Activated naive CD8-positive, alpha-beta T cell treated with anti-CD3 and anti-CD28 coated beads, Interleukin-2, amount 10 ng/mL, durations not matched to agents 7 days and 5 days (primary cell): ENCODE measurements at regions of chr17 and their contacts with region 1.

Region 1: GRCh38 chr17:75877752-75878173 is 618 bp downstream of the TRIM47 start:
- DNase-seq: peak; percentile 84
- ATAC-seq: peak; percentile 70
- H3K4me3 Mint-ChIP-seq: peak overlapping the region; percentile 91
- H3K27ac Mint-ChIP-seq: peak overlapping the region; percentile 93
- H3K4me1 Mint-ChIP-seq: peaks cover 28% of the 10 kb centered on the region
- H3K27me3 Mint-ChIP-seq: peaks cover 12% of the 10 kb centered on the region

Region 2: DNA sequence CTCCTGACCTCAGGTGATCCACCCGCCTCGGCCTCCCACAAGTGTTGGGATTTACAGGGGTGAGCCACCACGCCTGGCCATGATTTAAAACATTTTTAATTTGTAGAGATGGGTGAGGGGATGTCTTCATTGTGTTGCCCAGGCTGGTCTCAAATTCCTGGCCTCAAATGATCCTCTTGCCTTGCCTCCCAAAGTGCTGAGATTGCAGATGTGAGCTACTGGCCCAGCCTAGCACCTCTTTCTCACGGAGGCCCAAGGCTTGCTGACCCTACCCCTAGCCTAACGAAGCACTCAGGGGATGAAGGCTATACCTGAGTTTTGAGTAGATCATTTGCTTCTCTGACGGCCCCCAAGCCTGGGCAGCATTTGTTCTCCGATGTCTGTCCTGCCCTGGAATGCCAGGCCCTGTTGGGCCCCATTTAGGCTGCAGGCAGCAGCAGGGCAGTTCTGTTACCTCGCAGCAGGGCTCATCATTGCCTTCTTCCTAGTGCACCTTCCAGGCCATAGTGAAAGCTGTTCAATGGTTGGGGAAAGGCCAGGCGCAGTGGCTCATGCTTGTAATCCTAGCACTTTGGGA is 66.5 kb before region 1 on chr17:
- POLR2A ChIA-PET with region 1: no interaction called
- DNase-seq: no peak
- ATAC-seq: no peak
- H3K4me3 Mint-ChIP-seq: no peak overlapping the region
- H3K27ac Mint-ChIP-seq: no peak overlapping the region
- H3K4me1 Mint-ChIP-seq: no peaks in the 10 kb centered on the region
- H3K27me3 Mint-ChIP-seq: no peaks in the 10 kb centered on the region

Region 3: DNA sequence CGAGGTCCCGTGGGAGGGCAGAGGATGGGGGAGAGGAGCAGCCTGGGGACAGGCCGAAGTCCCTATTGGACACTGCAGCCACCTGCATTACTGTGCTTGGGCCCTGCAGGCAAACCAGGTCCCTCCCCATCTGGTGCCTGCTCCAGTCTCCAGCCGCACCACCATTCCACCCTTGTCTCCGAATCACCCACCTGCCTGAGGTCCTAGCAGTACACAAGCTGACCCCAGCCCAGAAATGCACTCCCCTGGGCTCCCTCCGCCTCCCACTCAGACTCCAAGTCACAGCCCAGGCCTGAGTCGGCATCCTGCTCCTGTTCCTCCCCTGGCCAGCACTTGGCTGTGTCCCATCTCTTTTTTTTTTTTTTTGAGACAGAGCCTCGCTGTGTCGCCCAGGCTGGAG is 39.9 kb before region 1 on chr17:
- POLR2A ChIA-PET with region 1: interaction called, 11 read pairs
- DNase-seq: no peak
- ATAC-seq: no peak
- H3K4me3 Mint-ChIP-seq: no peak overlapping the region
- H3K27ac Mint-ChIP-seq: peak overlapping the region; percentile 52
- H3K4me1 Mint-ChIP-seq: peaks cover 29% of the 10 kb centered on the region
- H3K27me3 Mint-ChIP-seq: no peaks in the 10 kb centered on the region

Region 4: GRCh38 chr17:75864448-75864871 is 13.3 kb before region 1 on chr17:
- POLR2A ChIA-PET with region 1: interaction called, 41 read pairs
- DNase-seq: peak; percentile 58
- ATAC-seq: peak; percentile 77
- H3K4me3 Mint-ChIP-seq: peak overlapping the region; percentile 48
- H3K27ac Mint-ChIP-seq: peak overlapping the region; percentile 76
- H3K4me1 Mint-ChIP-seq: peaks cover 18% of the 10 kb centered on the region
- H3K27me3 Mint-ChIP-seq: no peaks in the 10 kb centered on the region

Region 5: GRCh38 chr17:75896415-75897159 is 18.8 kb after region 1 on chr17 and contains the start of gene TRIM65:
- POLR2A ChIA-PET with region 1: interaction called, 68 read pairs
- DNase-seq: peak; percentile 89
- ATAC-seq: peak; percentile 87
- H3K4me3 Mint-ChIP-seq: peak within 1 kb of the TSS; percentile 87
- H3K27ac Mint-ChIP-seq: peak within 1 kb of the TSS; percentile 86
- H3K4me1 Mint-ChIP-seq: peaks cover 18% of the 10 kb centered on the region
- H3K27me3 Mint-ChIP-seq: no peaks in the 10 kb centered on the region
- total RNA-seq, gene TRIM65: 35.3 to 36.3 TPM